ENCODE measurements at regions of chr17 and their contacts with region 1.

Region 1: GRCh38 chr17:80892019-80892855 is 99.4 kb upstream of the CHMP6 start:
- DNase-seq: peak; percentile 97
- ATAC-seq: peak; percentile 82
- H3K4me3 Mint-ChIP-seq: peak overlapping the region; percentile 69
- H3K27ac Mint-ChIP-seq: peak overlapping the region; percentile 92
- H3K4me1 Mint-ChIP-seq: peaks cover 68% of the 10 kb centered on the region
- H3K27me3 Mint-ChIP-seq: no peaks in the 10 kb centered on the region
- CTCF ChIP-seq: no peak

Region 2: DNA sequence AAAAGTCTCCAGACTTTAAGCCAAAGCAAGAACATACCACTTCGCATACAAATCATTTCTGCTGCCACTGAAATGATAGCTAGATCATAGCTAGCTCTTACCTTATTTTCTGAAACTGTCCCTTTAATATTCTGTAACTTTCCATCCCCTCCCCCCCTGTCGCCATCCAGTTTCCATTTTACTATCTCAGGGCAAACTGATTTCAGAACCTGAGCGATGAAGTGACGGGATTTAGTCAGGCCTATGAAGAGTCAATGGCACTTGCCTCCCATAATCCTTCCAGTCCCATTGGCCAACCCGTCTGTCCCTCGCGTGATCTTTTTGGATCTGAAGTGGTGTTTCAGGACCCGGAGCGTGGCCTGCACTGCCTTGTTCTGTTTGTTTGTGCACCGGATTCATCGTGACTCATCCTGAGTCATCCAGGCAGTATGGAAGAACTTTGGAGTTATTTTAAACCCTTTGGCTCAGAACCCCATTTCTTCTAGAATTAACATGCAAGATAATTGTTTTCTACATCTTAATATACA is 100.4 kb before region 1 on chr17:
- CTCF ChIA-PET with region 1: interaction called, 3 read pairs
- POLR2A ChIA-PET with region 1: interaction called, 12 read pairs
- intact Hi-C with region 1: loop called (anchors 10 kb)
- DNase-seq: peak; percentile 83
- ATAC-seq: peak; percentile 59
- H3K4me3 Mint-ChIP-seq: peak overlapping the region; percentile 58
- H3K27ac Mint-ChIP-seq: peak overlapping the region; percentile 96
- H3K4me1 Mint-ChIP-seq: peaks cover 76% of the 10 kb centered on the region
- H3K27me3 Mint-ChIP-seq: no peaks in the 10 kb centered on the region
- CTCF ChIP-seq: no peak

Region 3: GRCh38 chr17:80805032-80805751 is 87.0 kb before region 1 on chr17:
- CTCF ChIA-PET with region 1: no interaction called
- POLR2A ChIA-PET with region 1: no interaction called
- intact Hi-C with region 1: no loop called
- DNase-seq: no peak
- ATAC-seq: no peak
- H3K4me3 Mint-ChIP-seq: no peak overlapping the region
- H3K27ac Mint-ChIP-seq: no peak overlapping the region
- H3K4me1 Mint-ChIP-seq: peaks cover 8% of the 10 kb centered on the region
- H3K27me3 Mint-ChIP-seq: no peaks in the 10 kb centered on the region
- CTCF ChIP-seq: no peak

Region 4: GRCh38 chr17:80832888-80833583 is 59.2 kb before region 1 on chr17:
- CTCF ChIA-PET with region 1: no interaction called
- POLR2A ChIA-PET with region 1: interaction called, 5 read pairs
- intact Hi-C with region 1: loop called (anchors 10 kb)
- DNase-seq: peak; percentile 90
- ATAC-seq: peak; percentile 91
- H3K4me3 Mint-ChIP-seq: peak overlapping the region; percentile 77
- H3K27ac Mint-ChIP-seq: peak overlapping the region; percentile 96
- H3K4me1 Mint-ChIP-seq: peaks cover 30% of the 10 kb centered on the region
- H3K27me3 Mint-ChIP-seq: no peaks in the 10 kb centered on the region
- CTCF ChIP-seq: no peak

Region 5: GRCh38 chr17:80855948-80856862 is 36.0 kb before region 1 on chr17:
- CTCF ChIA-PET with region 1: interaction called, 3 read pairs
- POLR2A ChIA-PET with region 1: interaction called, 18 read pairs
- intact Hi-C with region 1: loop called (anchors 5 kb)
- DNase-seq: peak; percentile 97
- ATAC-seq: peak; percentile 97
- H3K4me3 Mint-ChIP-seq: peak overlapping the region; percentile 41
- H3K27ac Mint-ChIP-seq: peak overlapping the region; percentile 98
- H3K4me1 Mint-ChIP-seq: peaks cover 62% of the 10 kb centered on the region
- H3K27me3 Mint-ChIP-seq: no peaks in the 10 kb centered on the region
- CTCF ChIP-seq: no peak

Region 6: GRCh38 chr17:80876950-80877728 is 15.1 kb before region 1 on chr17:
- CTCF ChIA-PET with region 1: interaction called, 9 read pairs
- POLR2A ChIA-PET with region 1: interaction called, 39 read pairs
- intact Hi-C with region 1: loop called (anchors 1 kb)
- DNase-seq: peak; percentile 92
- ATAC-seq: peak; percentile 91
- H3K4me3 Mint-ChIP-seq: peak overlapping the region; percentile 55
- H3K27ac Mint-ChIP-seq: peak overlapping the region; percentile 95
- H3K4me1 Mint-ChIP-seq: peaks cover 62% of the 10 kb centered on the region
- H3K27me3 Mint-ChIP-seq: no peaks in the 10 kb centered on the region
- CTCF ChIP-seq: no peak

Measured in activated CD8-positive, alpha-beta T cell treated with anti-CD3 and anti-CD28 coated beads for 36 hours (primary cell).